HCT116 (cell line): ENCODE measurements at regions of chr17 and their contacts with region 1.

Region 1: GRCh38 chr17:44324571-44325275 is at the start of gene SLC25A39:
- DNase-seq: peak; percentile 84
- ATAC-seq: peak; percentile 75
- H3K4me3 ChIP-seq: peak within 1 kb of the TSS; percentile 85 to 87
- H3K27ac ChIP-seq: peak within 1 kb of the TSS; percentile 98
- H3K4me1 ChIP-seq: peaks cover 15 to 30% of the 10 kb centered on the region in 2 experiments
- H3K27me3 ChIP-seq: no peaks in the 10 kb centered on the region
- CTCF ChIP-seq: no peak
- POLR2A ChIP-seq: peak; percentile 87
- RAD21 ChIP-seq: no peak
- total RNA-seq, gene SLC25A39: 326 TPM

Region 2: DNA sequence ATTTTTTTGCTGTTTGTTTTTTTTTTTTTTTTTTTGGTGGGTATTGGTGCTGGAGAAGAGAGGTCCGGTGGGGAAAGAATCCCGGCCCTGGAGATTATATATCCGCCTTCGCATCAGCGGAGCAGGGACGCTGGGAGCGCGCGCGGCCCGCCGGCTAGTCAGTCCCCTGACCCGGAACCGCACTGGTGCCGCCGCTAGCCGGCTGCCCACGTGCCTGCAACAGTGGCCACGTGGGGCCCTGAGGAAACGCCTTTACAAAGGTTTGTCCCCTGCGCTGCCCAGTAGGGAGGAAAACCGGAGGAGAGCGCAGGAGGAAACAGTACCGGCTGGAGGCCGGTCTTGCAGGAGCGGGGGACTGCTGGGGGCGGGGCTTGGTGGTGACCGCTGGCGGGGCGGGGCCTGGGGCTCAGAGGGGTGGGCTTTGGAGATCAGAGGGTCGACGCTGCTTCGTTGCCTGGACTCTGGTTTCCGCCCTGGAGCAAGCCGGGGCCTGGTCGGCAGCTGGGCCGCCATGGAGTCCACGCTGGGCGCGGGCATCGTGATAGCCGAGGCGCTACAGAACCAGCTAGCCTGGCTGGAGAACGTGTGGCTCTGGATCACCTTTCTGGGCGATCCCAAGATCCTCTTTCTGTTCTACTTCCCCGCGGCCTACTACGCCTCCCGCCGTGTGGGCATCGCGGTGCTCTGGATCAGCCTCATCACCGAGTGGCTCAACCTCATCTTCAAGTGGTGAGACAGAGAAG is 254.1 kb before region 1 on chr17 and contains the start of gene G6PC3:
- CTCF ChIA-PET with region 1: no interaction called
- POLR2A ChIA-PET with region 1: no interaction called
- RAD21 ChIA-PET with region 1: no interaction called
- intact Hi-C with region 1: no loop called
- DNase-seq: peak; percentile 96
- ATAC-seq: peak; percentile 84
- H3K4me3 ChIP-seq: peak within 1 kb of the TSS; percentile 76 to 81
- H3K27ac ChIP-seq: peak within 1 kb of the TSS; percentile 88
- H3K4me1 ChIP-seq: peaks cover 18 to 39% of the 10 kb centered on the region in 2 experiments
- H3K27me3 ChIP-seq: no peaks in the 10 kb centered on the region
- CTCF ChIP-seq: no peak
- POLR2A ChIP-seq: no peak
- RAD21 ChIP-seq: no peak; the same call in 1 of the 2 replicates
- total RNA-seq, gene G6PC3: 50.6 TPM

Region 3: DNA sequence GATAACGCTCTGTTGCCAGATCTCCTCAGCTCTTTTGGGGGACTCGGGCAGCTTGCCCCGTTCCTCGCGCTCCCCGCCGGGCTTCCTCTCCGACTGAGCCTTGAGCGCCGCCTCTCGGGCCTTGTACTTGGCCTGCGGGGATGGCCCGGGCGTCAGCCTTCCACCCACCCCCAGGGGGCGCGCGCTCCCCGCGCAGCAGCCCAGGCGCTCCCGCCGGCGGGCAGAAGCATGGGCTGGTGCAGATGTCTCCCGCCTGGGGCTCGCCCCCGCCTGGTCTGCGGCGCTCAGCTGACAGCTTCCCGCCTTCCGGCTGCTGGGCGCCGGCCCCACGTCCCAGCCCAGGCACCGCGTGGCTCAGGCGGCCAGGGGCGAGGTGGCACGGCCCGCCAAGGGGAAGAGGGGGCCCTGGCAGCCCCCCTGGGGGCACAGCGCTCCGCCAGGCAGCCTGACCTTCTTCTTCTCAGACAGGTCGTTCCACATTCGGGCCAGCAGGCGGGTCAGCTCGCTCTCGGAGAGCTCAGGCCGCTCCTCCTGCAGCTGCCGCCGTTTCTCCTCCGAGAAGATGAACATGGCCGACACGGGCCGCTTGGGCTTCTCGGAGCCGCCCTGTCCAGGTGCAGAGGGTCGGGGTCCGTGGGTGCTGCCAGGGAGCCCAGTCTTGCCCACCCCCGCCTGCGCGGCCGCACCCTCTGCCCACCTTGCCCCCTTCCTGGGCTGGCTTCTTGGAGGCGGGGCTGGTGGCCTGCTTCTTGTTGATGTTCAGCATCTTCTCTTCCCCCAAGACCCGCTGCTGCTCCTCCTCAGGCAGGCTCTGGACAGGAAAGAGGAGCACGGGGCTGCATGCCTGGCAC is 114.2 kb before region 1 on chr17:
- CTCF ChIA-PET with region 1: interaction called, 7 read pairs
- POLR2A ChIA-PET with region 1: interaction called, 3 read pairs
- RAD21 ChIA-PET with region 1: interaction called in 1 of 2 experiments, 4 read pairs
- intact Hi-C with region 1: loop called (anchors 2 kb)
- DNase-seq: peak; percentile 63
- ATAC-seq: peak; percentile 88
- H3K4me3 ChIP-seq: 0 out of 4 replicates have a peak overlapping the region, but pooled peaks of 1 of the 2 experiments have one; percentile 2
- H3K27ac ChIP-seq: peak overlapping the region; percentile 42
- H3K4me1 ChIP-seq: peaks cover 19 to 49% of the 10 kb centered on the region in 2 experiments
- H3K27me3 ChIP-seq: no peaks in the 10 kb centered on the region
- CTCF ChIP-seq: peak; percentile 90 to 99 (median 99)
- POLR2A ChIP-seq: no peak
- RAD21 ChIP-seq: peak; percentile 99

Region 4: DNA sequence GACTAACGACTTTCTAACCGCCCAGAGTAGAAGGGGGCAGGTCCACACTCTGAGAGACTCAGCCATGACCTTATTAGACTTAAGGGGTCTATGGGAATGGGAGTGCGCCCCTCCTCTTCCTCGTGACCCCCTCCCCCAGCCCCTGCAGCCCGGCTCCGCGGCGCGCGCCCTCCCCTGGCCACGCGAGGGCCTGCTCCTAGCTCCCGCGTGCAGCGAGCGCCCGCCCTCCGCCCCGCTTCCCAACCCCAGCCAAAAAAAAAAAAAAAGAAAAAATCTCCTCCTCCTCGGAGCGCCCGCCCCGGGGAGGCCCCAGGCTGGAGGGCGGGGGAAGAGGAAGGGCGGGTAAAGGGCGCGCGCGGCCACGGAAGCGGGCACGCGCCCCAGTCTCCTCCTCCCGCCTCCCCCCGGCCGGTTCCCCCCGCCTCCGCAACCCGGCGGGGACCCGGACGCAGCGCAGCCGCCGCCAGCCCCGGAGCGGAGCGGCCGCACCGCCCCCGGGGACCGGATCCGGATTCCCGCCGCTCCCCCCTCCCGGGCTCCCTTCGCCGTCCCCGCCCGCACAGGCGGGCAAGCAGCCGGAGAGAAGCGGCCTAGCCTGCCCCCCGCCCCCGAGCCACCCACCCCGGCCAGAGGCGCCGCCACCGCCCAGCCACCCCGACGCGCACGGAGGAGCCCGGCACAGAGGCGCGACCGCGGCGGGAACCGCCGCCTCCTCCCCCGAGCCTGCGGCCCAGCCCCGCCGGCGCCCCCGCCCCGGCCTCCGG is 106.2 kb before region 1 on chr17:
- CTCF ChIA-PET with region 1: interaction called, 5 read pairs
- POLR2A ChIA-PET with region 1: interaction called, 6 read pairs
- RAD21 ChIA-PET with region 1: no interaction called
- intact Hi-C with region 1: loop called (anchors 2 kb)
- DNase-seq: peak; percentile 74
- ATAC-seq: peak; percentile 51
- H3K4me3 ChIP-seq: peak overlapping the region; percentile 71 to 73
- H3K27ac ChIP-seq: peak overlapping the region; percentile 100
- H3K4me1 ChIP-seq: peaks cover 21 to 37% of the 10 kb centered on the region in 2 experiments
- H3K27me3 ChIP-seq: no peaks in the 10 kb centered on the region
- CTCF ChIP-seq: peak; percentile 36 to 60 (median 52); a peak in 4 of 6 replicates
- POLR2A ChIP-seq: no peak
- RAD21 ChIP-seq: no peak; the same call in 1 of the 2 replicates

Region 5: GRCh38 chr17:44400226-44400847 is 75.6 kb after region 1 on chr17:
- CTCF ChIA-PET with region 1: no interaction called
- POLR2A ChIA-PET with region 1: no interaction called
- RAD21 ChIA-PET with region 1: no interaction called
- intact Hi-C with region 1: loop called (anchors 2 kb)
- DNase-seq: peak; percentile 12
- ATAC-seq: peak; percentile 74; the same call in 1 of the 2 replicates
- H3K4me3 ChIP-seq: no peak overlapping the region
- H3K27ac ChIP-seq: no peak overlapping the region
- H3K4me1 ChIP-seq: no peaks in the 10 kb centered on the region
- H3K27me3 ChIP-seq: no peaks in the 10 kb centered on the region
- CTCF ChIP-seq: peak; percentile 50 to 59 (median 53); a peak in 5 of 6 replicates
- POLR2A ChIP-seq: no peak
- RAD21 ChIP-seq: peak; percentile 65